ENCODE measurements at regions of chr15 and their contacts with region 1.

Region 1: DNA sequence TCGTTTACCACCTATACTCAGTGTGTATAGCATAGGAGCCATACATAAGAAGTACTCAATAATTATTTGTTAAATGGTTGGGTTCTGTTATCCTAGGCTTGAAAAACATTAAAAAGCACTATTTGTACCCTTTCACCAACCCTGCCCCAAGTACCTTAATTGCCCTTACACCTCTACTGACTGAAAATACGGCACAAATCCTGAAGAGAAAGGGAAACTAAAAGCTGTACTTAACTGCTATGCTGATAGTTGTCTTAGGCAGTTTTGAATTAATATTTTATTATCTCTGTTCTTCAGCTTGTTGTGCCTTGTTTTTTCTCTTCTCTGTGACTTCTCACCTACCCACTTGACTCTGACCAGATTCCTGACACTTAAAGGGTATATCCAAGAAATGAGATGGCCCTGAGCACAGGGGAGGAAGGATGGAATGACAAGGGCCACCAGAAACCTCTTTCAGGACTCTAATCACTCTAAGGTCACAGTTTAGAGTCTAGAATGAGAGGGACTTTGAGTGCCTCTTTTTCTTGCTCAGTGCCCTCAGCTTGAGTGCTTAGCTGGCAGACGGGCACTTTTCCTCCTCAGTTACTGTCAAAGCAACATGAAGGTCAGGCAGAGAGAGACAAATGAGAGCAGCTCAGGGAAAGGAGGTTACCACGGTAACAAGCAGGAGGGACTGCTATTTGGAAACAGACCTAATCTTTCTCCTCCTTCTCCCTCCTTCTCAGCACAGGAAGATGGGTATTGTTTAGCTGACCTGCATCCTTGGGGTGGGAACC is 136.5 kb downstream of the ZNF609 start:
- DNase-seq: no peak
- ATAC-seq: peak; percentile 71 to 79
- H3K4me3 ChIP-seq: no peak overlapping the region
- H3K27ac ChIP-seq: no peak overlapping the region
- H3K4me1 ChIP-seq: peaks cover 6% of the 10 kb centered on the region
- H3K27me3 ChIP-seq: no peaks in the 10 kb centered on the region

Region 2: GRCh38 chr15:64478863-64479262 is 118.0 kb before region 1 on chr15:
- intact Hi-C with region 1: no loop called
- DNase-seq: no peak
- ATAC-seq: no peak
- H3K4me3 ChIP-seq: no peak overlapping the region
- H3K27ac ChIP-seq: no peak overlapping the region
- H3K4me1 ChIP-seq: no peaks in the 10 kb centered on the region
- H3K27me3 ChIP-seq: no peaks in the 10 kb centered on the region

Region 3: GRCh38 chr15:64651573-64652260 is 54.8 kb after region 1 on chr15:
- intact Hi-C with region 1: loop called in 1 of 4 experiments (anchors 10 kb)
- DNase-seq: no peak
- ATAC-seq: no peak
- H3K4me3 ChIP-seq: no peak overlapping the region
- H3K27ac ChIP-seq: no peak overlapping the region
- H3K4me1 ChIP-seq: no peaks in the 10 kb centered on the region
- H3K27me3 ChIP-seq: no peaks in the 10 kb centered on the region

Measured in right cardiac atrium (tissue), 5 donors.